Left cardiac atrium (tissue), 4 donors: ENCODE measurements at regions of chr18 and their contacts with region 1.

Region 1: DNA sequence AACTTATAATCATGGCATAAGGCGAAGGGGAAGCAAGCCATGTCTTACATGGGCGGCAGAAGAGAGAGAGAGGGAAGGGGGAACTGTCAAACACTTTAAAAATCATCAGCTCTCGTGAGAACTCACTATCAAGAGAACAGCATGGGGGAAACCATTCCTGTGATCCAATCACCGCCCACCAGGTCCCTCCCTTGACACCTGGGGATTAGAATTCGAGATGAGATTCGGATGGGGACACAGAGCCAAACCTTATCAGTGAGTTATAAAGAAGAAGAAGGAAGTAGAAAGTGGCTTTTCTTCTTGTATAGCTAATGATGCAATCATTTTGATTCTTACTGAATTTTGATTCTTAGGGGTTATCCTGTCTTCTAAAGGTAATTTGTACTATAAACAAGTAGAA is 51.4 kb downstream of the SMCHD1 start:
- DNase-seq: no peak
- ATAC-seq: no peak

Region 2: DNA sequence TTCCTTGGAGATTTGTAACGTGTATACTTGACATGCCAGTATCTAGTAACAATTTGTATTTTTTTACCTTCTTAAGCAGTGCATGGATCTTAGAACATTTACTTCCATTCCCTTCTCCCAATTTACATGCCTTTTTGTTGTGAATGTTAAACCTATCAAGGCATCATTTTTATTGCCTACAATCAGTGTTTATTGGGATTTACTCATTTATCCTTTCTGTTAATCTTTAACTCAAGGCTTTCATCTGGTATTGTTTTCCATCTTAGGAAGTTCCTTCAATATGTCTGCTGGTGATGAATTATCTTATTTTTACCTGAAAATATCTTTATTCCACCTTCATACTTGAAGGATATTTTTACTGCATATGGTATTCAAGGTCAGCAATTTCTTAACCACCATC is 51.4 kb after region 1 on chr18:
- intact Hi-C with region 1: loop called in 1 of 2 experiments (anchors 10 kb)
- DNase-seq: no peak
- ATAC-seq: no peak